ENCODE measurements at regions of chr16 and their contacts with region 1.

Region 1: DNA sequence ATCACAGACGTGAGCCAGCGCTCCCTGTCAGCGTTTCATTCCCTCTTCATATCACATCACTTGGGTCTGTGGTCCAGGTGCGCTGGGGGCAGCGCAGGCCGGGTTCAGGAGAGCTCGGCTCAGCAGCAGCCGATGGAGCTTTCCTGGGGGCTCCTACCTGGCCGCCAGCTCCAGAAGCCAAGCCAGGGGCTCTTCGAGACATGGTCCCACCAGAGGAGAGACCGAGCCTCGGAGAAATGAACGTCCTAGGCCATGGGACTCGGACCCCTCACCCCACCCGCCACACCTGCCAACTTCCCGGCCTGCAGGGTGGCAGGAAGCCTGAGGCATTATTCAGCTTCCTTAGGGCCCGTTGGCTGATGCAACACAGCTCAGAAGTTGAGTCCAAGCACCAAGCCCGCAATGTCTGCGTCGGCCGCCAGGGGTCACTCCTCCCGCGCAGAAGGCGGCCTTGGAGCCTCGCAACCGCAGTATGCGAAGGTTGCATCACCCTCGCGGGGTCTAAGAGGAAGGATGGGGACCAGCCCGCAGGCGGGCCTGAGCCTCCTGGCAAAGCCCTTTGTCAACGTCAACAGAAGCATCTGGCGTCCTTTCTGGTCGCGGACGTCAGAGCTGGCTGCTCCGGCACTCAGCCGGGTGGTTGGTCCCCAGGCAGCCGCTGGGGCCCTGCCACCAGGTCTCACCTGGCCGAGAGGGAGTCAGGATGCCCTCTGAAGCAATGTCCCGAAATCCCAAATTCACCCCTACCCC is 13.2 kb upstream of the KLHDC4 start:
- DNase-seq: peak; percentile 85 to 99
- ATAC-seq: peak; percentile 87 to 94
- H3K4me3 ChIP-seq: peak overlapping the region; percentile 10; the same call in 1 of the 3 replicates
- H3K27ac ChIP-seq: peak overlapping the region; percentile 96
- H3K4me1 ChIP-seq: peaks cover 43% of the 10 kb centered on the region
- CTCF ChIP-seq: peak; percentile 97
- EP300 ChIP-seq: peak; percentile 97 to 98
- POLR2A ChIP-seq: no peak
- RAD21 ChIP-seq: peak; percentile 100

Region 2: GRCh38 chr16:87721622-87722585 is 57.1 kb before region 1 on chr16:
- CTCF ChIA-PET with region 1: no interaction called
- POLR2A ChIA-PET with region 1: no interaction called
- DNase-seq: no peak
- ATAC-seq: no peak
- H3K4me3 ChIP-seq: no peak overlapping the region
- H3K27ac ChIP-seq: no peak overlapping the region
- H3K4me1 ChIP-seq: peaks cover 7% of the 10 kb centered on the region; the same call in 1 of the 3 replicates
- CTCF ChIP-seq: no peak
- EP300 ChIP-seq: no peak
- POLR2A ChIP-seq: no peak
- RAD21 ChIP-seq: no peak

Region 3: GRCh38 chr16:87790278-87791032 is 11.4 kb after region 1 on chr16:
- CTCF ChIA-PET with region 1: interaction called, 147 read pairs
- POLR2A ChIA-PET with region 1: interaction called, 27 read pairs
- DNase-seq: peak; percentile 83 to 94
- ATAC-seq: peak; percentile 62 to 80
- H3K4me3 ChIP-seq: peak overlapping the region; percentile 3; the same call in 1 of the 3 replicates
- H3K27ac ChIP-seq: peak overlapping the region; percentile 95 to 96
- H3K4me1 ChIP-seq: peaks cover 76% of the 10 kb centered on the region
- CTCF ChIP-seq: no peak
- EP300 ChIP-seq: peak; percentile 61 to 81; a peak in 3 of 5 replicates
- POLR2A ChIP-seq: no peak
- RAD21 ChIP-seq: peak; percentile 26 to 35; a peak in 3 of 5 replicates

Region 4: DNA sequence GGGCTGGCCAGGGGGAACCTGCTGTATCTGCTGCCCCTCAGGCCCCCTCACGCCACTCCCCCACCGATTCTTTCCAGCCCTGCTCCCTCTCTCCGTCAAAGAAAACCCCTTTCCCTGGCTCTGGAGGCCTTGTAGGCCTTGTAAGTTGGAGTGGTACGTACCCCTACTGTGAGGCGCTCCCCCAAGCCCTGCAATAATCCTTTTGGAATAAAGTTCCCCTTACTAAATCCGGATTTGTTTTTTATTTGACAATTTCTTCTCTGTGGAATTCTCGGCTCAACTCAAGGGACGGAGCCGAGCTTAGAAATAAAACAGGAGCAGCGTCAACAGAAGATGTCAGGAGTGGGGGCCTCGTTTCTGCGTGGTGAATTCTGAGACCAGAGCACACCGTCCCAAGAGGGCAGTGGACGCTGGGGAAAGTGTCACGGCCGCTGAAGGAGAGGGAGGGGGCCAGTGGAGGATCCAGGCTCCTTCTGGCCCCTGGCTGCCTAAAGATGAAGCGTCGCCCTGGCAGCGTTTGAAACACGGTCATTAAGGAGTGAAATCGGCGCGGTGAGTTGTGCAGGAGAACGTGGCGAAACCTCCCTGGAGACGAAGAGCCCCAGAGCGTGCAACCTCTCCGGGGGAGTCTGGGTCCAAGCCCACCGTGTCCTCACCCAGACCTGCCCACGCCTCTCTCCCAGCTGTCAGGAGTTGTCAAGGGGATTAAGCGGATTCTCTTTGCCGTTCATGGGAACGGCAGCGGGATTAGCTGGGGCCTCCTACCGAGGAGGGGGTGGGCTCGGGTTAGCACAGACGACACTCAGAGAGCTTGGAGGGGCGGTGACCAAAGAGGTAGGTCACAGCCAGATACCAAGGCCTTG is 43.3 kb after region 1 on chr16:
- CTCF ChIA-PET with region 1: interaction called, 417 read pairs
- POLR2A ChIA-PET with region 1: interaction called, 52 read pairs
- DNase-seq: no peak
- ATAC-seq: no peak
- H3K4me3 ChIP-seq: no peak overlapping the region
- H3K27ac ChIP-seq: peak overlapping the region; percentile 97 to 99; a peak in 5 of 6 replicates
- H3K4me1 ChIP-seq: peaks cover 39% of the 10 kb centered on the region
- CTCF ChIP-seq: no peak
- EP300 ChIP-seq: no peak
- POLR2A ChIP-seq: no peak
- RAD21 ChIP-seq: no peak

Region 5: GRCh38 chr16:87834623-87835407 is 55.8 kb after region 1 on chr16:
- CTCF ChIA-PET with region 1: interaction called, 417 read pairs
- POLR2A ChIA-PET with region 1: interaction called, 52 read pairs
- DNase-seq: peak in 1 of 2 experiments; percentile 81
- ATAC-seq: peak; percentile 1 to 2; a peak in 3 of 6 replicates
- H3K4me3 ChIP-seq: no peak overlapping the region; the same call in 2 of the 3 replicates
- H3K27ac ChIP-seq: peak overlapping the region; percentile 97 to 99
- H3K4me1 ChIP-seq: peaks cover 100% of the 10 kb centered on the region
- CTCF ChIP-seq: no peak
- EP300 ChIP-seq: no peak
- POLR2A ChIP-seq: no peak
- RAD21 ChIP-seq: no peak

Region 6: DNA sequence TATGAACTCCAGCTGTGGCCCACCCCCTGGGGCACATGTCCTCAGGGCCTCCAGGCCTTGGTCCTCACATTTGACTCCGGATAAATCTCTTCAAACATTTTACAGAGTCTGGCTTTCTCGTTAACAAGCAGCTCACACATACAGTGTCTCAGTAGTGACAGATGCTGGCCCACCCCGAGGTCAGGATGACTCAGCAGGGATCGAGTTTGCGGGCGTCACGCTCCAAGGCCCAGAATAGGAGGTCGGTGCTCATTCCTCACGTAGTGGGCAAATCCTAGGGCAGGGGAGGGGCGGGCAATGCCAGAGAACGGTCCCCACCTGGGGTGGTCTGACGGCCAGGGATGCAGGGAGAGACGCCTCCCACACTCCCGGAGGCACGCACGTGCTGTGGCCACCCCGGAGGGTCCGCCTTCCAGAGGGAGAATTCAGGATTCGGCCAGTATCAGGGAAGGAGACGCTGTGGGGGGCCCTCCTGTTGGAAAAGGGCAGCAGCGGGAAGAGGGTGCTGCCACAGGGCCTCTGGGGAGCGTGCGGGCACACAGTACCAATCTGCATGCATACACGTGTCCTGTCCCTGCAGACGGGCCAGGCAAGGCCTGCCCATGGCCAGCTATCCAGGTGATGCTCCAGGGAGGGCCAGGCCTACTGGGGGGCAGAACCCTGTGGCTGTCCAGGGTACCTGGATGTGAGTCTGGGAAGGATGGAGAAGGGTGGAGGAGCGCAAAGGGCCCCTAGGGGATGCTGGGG is 81.7 kb after region 1 on chr16:
- CTCF ChIA-PET with region 1: interaction called, 269 read pairs
- POLR2A ChIA-PET with region 1: interaction called, 6 read pairs
- DNase-seq: peak; percentile 27 to 82
- ATAC-seq: peak; percentile 31 to 35
- H3K4me3 ChIP-seq: peak overlapping the region; percentile 77
- H3K27ac ChIP-seq: peak overlapping the region; percentile 97 to 99
- H3K4me1 ChIP-seq: peaks cover 57% of the 10 kb centered on the region
- CTCF ChIP-seq: no peak
- EP300 ChIP-seq: peak in 1 of 2 experiments; percentile 38; a peak in 2 of 5 replicates
- POLR2A ChIP-seq: no peak
- RAD21 ChIP-seq: no peak

Region 7: DNA sequence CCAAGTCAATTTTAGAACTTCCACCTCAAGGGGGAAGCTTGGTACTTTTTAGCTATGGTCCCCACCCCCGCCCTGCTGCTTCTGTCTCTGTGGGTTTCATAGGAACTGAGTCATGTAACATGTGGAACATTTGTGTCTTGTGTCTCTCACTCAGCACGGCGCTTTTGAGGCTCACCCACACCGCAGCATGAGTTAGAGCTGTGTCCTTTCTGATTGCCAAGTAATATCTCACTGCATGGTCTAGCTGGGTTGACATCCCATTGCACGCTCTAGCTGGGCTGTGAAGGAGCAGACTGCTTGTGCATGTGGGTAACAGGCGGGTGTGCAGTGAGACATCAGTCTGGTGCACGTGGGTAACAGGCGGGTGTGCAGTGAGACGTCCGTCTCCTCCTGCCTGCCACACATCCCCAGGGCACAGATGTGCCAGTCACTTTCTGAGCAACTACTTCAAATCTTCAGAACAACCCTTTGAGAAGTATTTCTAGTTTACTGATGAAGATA is 116.7 kb after region 1 on chr16:
- CTCF ChIA-PET with region 1: interaction called, 10 read pairs
- POLR2A ChIA-PET with region 1: no interaction called
- DNase-seq: no peak
- ATAC-seq: no peak
- H3K4me3 ChIP-seq: no peak overlapping the region
- H3K27ac ChIP-seq: no peak overlapping the region
- H3K4me1 ChIP-seq: peaks cover 7% of the 10 kb centered on the region; the same call in 2 of the 3 replicates
- CTCF ChIP-seq: no peak
- EP300 ChIP-seq: no peak
- POLR2A ChIP-seq: no peak
- RAD21 ChIP-seq: no peak

Measured in A549 (cell line).